ENCODE measurements at regions of chr15 and their contacts with region 1.

Region 1: GRCh38 chr15:71079208-71080021 is 35.9 kb upstream of the THSD4 start:
- DNase-seq: peak; percentile 90
- ATAC-seq: no peak
- H3K4me3 ChIP-seq: no peak overlapping the region
- H3K27ac ChIP-seq: peak overlapping the region; percentile 42; the same call in 1 of the 2 replicates
- H3K4me1 ChIP-seq: peaks cover 15% of the 10 kb centered on the region
- H3K27me3 ChIP-seq: no peaks in the 10 kb centered on the region
- CTCF ChIP-seq: no peak
- POLR2A ChIP-seq: no peak
- RAD21 ChIP-seq: no peak

Region 2: DNA sequence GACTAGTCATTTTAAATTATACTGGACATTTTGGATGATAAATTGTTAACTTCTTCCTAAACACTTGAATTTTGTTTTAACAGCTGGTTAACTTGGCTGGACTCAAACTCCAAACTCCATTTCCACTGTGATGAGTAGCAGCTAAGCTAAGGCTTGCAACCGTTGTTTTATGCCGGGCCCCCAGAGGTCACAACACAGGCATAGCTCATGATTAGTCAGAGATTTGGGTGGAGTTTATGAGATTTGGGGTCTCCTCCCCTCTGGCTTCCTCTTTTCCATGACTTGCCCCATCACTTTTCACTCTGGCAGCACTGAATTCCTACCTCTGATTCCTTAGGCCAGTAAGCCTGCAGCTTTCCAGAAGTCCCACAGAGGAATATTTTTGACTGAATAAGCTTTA is 200.0 kb before region 1 on chr15:
- CTCF ChIA-PET with region 1: no interaction called
- POLR2A ChIA-PET with region 1: no interaction called
- dilution Hi-C with region 1: no loop called
- in situ Hi-C with region 1: no loop called
- intact Hi-C with region 1: no loop called
- DNase-seq: peak; percentile 93
- ATAC-seq: peak; percentile 87
- H3K4me3 ChIP-seq: no peak overlapping the region
- H3K27ac ChIP-seq: no peak overlapping the region
- H3K4me1 ChIP-seq: peaks cover 2% of the 10 kb centered on the region; the same call in 1 of the 2 replicates
- H3K27me3 ChIP-seq: no peaks in the 10 kb centered on the region
- CTCF ChIP-seq: no peak
- POLR2A ChIP-seq: no peak
- RAD21 ChIP-seq: no peak

Region 3: GRCh38 chr15:71043361-71043760 is 36.1 kb before region 1 on chr15:
- CTCF ChIA-PET with region 1: no interaction called
- POLR2A ChIA-PET with region 1: no interaction called
- dilution Hi-C with region 1: no loop called
- in situ Hi-C with region 1: no loop called
- intact Hi-C with region 1: loop called (anchors 5 kb)
- DNase-seq: peak; percentile 81
- ATAC-seq: no peak
- H3K4me3 ChIP-seq: no peak overlapping the region
- H3K27ac ChIP-seq: peak overlapping the region; percentile 67; the same call in 1 of the 2 replicates
- H3K4me1 ChIP-seq: peaks cover 11% of the 10 kb centered on the region
- H3K27me3 ChIP-seq: no peaks in the 10 kb centered on the region
- CTCF ChIP-seq: no peak
- POLR2A ChIP-seq: no peak
- RAD21 ChIP-seq: no peak

Region 4: DNA sequence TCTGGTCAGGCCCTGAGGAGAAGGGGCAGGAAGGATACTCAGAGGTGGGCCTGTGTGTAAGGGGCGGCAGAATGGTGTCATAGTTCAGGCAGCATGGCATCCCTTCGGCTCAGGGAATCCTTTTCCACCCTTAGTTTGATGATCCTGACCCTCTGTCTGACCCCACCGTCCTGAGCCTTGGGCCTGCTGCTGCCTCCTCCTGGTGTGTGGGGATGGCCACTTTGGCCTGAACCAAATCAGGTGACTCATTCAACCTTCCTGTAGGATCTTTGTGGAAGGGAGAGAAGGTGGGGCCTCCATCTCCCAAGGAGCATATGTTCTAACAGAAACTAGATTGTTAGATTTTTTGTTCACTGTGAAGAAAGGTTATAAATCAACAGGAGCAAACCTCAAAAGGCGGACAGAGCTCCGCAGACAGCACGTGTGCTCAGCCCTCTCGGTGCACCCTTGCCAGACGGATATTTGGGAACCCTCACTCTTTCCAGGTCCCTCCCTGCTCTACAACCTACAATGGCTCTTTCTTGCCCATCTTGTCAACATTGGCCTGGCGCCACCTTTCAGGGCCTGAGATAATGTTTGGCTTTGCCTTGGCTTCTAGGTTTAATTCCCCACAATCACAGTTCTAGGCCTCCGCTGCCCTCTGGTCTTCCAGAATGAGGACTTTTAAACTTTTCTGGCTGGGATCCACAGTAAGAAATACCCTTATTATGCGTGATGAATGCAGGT is 57.5 kb after region 1 on chr15:
- CTCF ChIA-PET with region 1: no interaction called
- POLR2A ChIA-PET with region 1: no interaction called
- dilution Hi-C with region 1: no loop called
- in situ Hi-C with region 1: no loop called
- intact Hi-C with region 1: no loop called
- DNase-seq: peak; percentile 62
- ATAC-seq: peak; percentile 67
- H3K4me3 ChIP-seq: no peak overlapping the region
- H3K27ac ChIP-seq: peak overlapping the region; percentile 77
- H3K4me1 ChIP-seq: peaks cover 14% of the 10 kb centered on the region
- H3K27me3 ChIP-seq: no peaks in the 10 kb centered on the region
- CTCF ChIP-seq: peak; percentile 26; the same call in 1 of the 2 replicates
- POLR2A ChIP-seq: no peak
- RAD21 ChIP-seq: no peak

Measured in IMR-90 (cell line).